Cardiac septum (tissue), 1 donor: ENCODE measurements at regions of chr6 and their contacts with region 1.

Region 1: GRCh38 chr6:161370880-161371279 is 97.0 kb upstream of the AGPAT4 start:
- DNase-seq: no peak

Region 2: DNA sequence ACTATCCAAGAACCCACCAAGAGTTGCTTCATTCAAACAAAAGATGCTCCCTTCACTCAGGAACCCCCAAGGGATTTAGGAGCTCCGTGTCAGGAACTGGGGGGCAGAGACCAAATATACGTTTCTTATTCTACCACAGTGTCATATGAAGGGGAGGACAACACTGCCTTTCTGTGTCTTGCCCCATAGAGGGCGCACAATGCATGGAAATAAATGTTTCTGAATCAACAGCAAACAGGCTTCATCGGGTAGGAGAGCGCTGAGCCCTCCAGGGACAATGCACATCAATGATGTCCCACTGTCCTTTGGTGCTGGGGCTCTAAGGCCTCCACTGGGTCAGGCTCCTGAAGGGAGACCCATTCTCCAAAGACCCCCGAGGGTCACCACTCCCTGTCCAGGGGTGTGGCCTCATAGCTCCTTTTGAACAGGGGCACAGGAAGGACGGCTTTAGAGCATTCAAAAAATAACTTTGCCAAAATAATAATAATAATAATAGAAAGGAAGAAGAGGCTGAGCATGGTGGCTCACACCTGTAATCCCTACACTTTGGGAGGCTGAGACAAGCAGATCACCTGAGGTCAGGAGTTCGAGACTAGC is 637.7 kb before region 1 on chr6:
- intact Hi-C with region 1: loop called (anchors 5 kb)
- DNase-seq: no peak

Region 3: GRCh38 chr6:160930547-160931377 is 440.1 kb before region 1 on chr6:
- intact Hi-C with region 1: loop called (anchors 2 kb)
- DNase-seq: peak; percentile 85

Region 4: DNA sequence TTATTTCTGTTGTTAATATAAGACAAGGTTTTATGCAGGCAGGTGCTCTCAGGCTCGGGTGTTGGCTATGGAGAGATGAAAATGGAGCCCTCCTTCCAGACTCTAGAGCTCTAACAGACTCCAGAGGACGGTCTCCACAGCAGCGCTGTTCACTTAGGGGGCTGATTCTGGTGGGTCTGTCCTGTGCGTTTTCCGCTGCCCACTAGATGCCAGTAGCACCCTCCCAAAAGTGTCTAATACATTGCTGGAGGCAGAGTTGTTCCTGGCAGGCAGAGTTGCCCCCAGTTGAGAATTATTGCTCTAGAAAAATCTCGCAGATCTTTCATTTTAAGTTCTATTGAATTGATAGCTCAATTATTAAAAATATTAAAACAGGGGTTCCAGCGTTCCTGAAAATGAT is 269.4 kb before region 1 on chr6:
- intact Hi-C with region 1: loop called (anchors 10 kb)
- DNase-seq: no peak

Region 5: GRCh38 chr6:161152907-161153662 is 217.8 kb before region 1 on chr6:
- intact Hi-C with region 1: loop called (anchors 5 kb)
- DNase-seq: no peak

Region 6: GRCh38 chr6:161301338-161301737 is 69.5 kb before region 1 on chr6:
- intact Hi-C with region 1: loop called (anchors 5 kb)
- DNase-seq: no peak